ENCODE measurements at regions of chr15 and their contacts with region 1.

Region 1: GRCh38 chr15:78034495-78035191 is 42.9 kb downstream of the TBC1D2B start:
- DNase-seq: peak; percentile 26
- ATAC-seq: peak; percentile 80
- H3K4me3 Mint-ChIP-seq: peak overlapping the region; percentile 45
- H3K27ac Mint-ChIP-seq: peak overlapping the region; percentile 51
- H3K4me1 Mint-ChIP-seq: peaks cover 50% of the 10 kb centered on the region
- H3K27me3 Mint-ChIP-seq: no peaks in the 10 kb centered on the region
- CTCF ChIP-seq: no peak

Region 2: DNA sequence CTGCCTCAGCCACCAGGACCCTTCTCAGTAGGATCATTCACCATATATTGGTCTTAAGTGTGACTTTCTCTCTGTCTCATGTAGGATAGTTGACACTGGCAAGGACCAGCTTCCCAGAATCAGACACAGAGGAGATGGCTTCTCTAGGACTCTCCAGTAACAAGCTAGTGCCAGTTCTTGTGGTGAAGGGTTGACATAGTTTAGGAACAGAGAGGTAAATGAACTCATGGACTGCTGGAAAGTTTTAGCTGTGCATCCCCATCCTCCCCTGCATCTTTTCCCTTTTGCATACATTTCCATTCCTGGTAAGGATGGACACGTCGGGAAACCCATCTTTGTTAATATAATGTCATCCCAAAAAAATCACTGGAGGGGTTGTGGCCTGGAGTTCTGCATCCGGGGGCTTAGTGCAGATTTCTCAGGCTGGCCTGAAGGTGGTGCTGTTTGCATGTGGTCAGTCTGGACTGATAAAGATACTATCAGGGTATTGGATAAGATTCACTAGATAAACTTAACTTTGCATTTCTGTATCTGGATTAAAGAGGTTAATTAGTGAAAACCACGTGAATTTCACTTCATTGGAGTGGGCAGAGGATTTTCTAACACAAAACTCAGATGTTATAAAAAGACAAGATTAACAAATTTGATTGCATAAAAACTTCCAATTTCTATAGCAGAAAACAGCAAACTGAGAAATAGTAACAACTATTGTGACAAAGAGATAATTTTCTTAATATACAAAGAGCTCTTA is 67.9 kb before region 1 on chr15:
- CTCF ChIA-PET with region 1: no interaction called
- POLR2A ChIA-PET with region 1: no interaction called
- intact Hi-C with region 1: loop called (anchors 10 kb)
- DNase-seq: no peak
- ATAC-seq: peak; percentile 77
- H3K4me3 Mint-ChIP-seq: no peak overlapping the region
- H3K27ac Mint-ChIP-seq: no peak overlapping the region
- H3K4me1 Mint-ChIP-seq: no peaks in the 10 kb centered on the region
- H3K27me3 Mint-ChIP-seq: peaks cover 8% of the 10 kb centered on the region
- CTCF ChIP-seq: peak; percentile 83

Region 3: DNA sequence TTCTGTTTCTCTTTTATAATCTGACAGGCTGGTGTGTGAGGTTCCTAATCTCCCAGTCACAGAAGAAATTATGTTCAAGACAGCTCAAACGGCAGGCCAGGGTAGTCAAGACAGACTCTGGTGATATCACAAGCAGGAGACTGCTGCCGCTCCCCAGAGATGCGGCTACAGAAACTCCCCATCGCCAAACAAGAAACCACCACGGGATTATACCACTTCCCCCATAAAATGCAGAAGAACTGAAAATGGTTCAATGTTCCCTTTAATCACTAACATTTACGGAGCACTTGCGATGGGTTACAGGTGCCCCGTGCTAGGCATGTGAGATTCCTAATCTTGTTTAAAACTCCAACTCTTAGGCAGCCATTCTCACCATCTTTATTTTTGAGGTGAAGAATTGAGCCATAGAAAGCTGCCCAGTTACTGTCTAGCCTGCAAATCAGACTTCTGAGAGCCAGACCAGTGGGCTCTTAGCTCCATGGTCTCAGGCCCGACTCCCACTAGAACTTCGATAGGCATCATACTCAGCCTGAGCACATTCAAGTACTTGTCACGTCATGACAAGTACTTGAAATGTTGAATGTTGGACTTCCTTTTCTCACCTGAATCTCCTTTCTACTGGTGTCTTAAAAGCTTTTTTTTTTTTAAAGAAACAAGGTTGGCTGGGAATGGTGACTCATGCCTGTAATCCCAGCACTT is 15.5 kb before region 1 on chr15:
- CTCF ChIA-PET with region 1: no interaction called
- POLR2A ChIA-PET with region 1: no interaction called
- intact Hi-C with region 1: loop called (anchors 1 kb)
- DNase-seq: peak; percentile 32
- ATAC-seq: peak; percentile 99
- H3K4me3 Mint-ChIP-seq: peak overlapping the region; percentile 16
- H3K27ac Mint-ChIP-seq: peak overlapping the region; percentile 50
- H3K4me1 Mint-ChIP-seq: peaks cover 13% of the 10 kb centered on the region
- H3K27me3 Mint-ChIP-seq: no peaks in the 10 kb centered on the region
- CTCF ChIP-seq: no peak

Region 4: GRCh38 chr15:78056714-78057269 is 22.1 kb after region 1 on chr15:
- CTCF ChIA-PET with region 1: no interaction called
- POLR2A ChIA-PET with region 1: interaction called, 5 read pairs
- intact Hi-C with region 1: loop called (anchors 2 kb)
- DNase-seq: peak; percentile 42
- ATAC-seq: peak; percentile 88
- H3K4me3 Mint-ChIP-seq: peak overlapping the region; percentile 52
- H3K27ac Mint-ChIP-seq: peak overlapping the region; percentile 79
- H3K4me1 Mint-ChIP-seq: peaks cover 74% of the 10 kb centered on the region
- H3K27me3 Mint-ChIP-seq: no peaks in the 10 kb centered on the region
- CTCF ChIP-seq: no peak

Region 5: GRCh38 chr15:78065284-78065872 is 30.7 kb after region 1 on chr15:
- CTCF ChIA-PET with region 1: interaction called, 4 read pairs
- POLR2A ChIA-PET with region 1: interaction called, 5 read pairs
- intact Hi-C with region 1: loop called (anchors 2 kb)
- DNase-seq: no peak
- ATAC-seq: no peak
- H3K4me3 Mint-ChIP-seq: peak overlapping the region; percentile 29
- H3K27ac Mint-ChIP-seq: no peak overlapping the region
- H3K4me1 Mint-ChIP-seq: peaks cover 18% of the 10 kb centered on the region
- H3K27me3 Mint-ChIP-seq: no peaks in the 10 kb centered on the region
- CTCF ChIP-seq: no peak

Region 6: GRCh38 chr15:78077058-78077877 is 42.6 kb after region 1 on chr15 and contains the start of gene TBC1D2B:
- CTCF ChIA-PET with region 1: no interaction called
- POLR2A ChIA-PET with region 1: no interaction called
- intact Hi-C with region 1: loop called (anchors 2 kb)
- DNase-seq: peak; percentile 68
- ATAC-seq: peak; percentile 91
- H3K4me3 Mint-ChIP-seq: peak within 1 kb of the TSS; percentile 92
- H3K27ac Mint-ChIP-seq: peak within 1 kb of the TSS; percentile 68
- H3K4me1 Mint-ChIP-seq: peaks cover 27% of the 10 kb centered on the region
- H3K27me3 Mint-ChIP-seq: no peaks in the 10 kb centered on the region
- CTCF ChIP-seq: no peak
- total RNA-seq, gene TBC1D2B: 12.9 and 13.7 TPM in 2 replicates

Measured in activated B cell treated with CpG ODN at 0.5 μM for 24 hours (primary cell).